PC-3 (cell line): ENCODE measurements at regions of chr4 and their contacts with region 1.

Region 1: GRCh38 chr4:26269038-26269437 is 51.8 kb upstream of the RBPJ start:
- DNase-seq: no peak
- ATAC-seq: no peak
- H3K4me3 ChIP-seq: no peak overlapping the region
- H3K27ac ChIP-seq: no peak overlapping the region
- H3K4me1 ChIP-seq: no peaks in the 10 kb centered on the region
- H3K27me3 ChIP-seq: no peaks in the 10 kb centered on the region
- CTCF ChIP-seq: no peak

Region 2: DNA sequence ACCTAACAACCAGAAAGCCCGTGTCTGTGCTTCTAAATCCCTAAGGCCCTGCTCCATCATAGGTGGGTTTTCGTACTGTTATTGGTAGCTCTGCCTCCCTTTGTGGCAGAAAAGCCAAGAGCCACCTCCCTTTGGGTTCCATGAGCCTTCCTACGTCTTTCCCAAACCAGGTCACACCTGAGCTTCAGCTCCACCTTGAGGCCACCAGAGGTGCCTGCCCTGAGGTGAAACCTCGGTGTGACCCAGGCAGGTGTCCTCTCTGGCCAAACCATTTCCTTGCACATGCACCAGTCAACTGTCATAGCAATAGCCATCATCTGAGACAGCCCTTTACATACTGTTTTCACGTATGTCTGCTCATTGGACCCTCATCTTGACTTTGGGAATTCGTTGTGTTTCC is 136.2 kb before region 1 on chr4:
- CTCF ChIA-PET with region 1: interaction called, 17 read pairs
- POLR2A ChIA-PET with region 1: no interaction called
- intact Hi-C with region 1: no loop called
- DNase-seq: no peak
- ATAC-seq: no peak
- H3K4me3 ChIP-seq: no peak overlapping the region
- H3K27ac ChIP-seq: no peak overlapping the region
- H3K4me1 ChIP-seq: peaks cover 8% of the 10 kb centered on the region
- H3K27me3 ChIP-seq: no peaks in the 10 kb centered on the region
- CTCF ChIP-seq: peak; percentile 38; the same call in 1 of the 2 replicates

Region 3: GRCh38 chr4:26299254-26299882 is 30.3 kb after region 1 on chr4:
- CTCF ChIA-PET with region 1: no interaction called
- POLR2A ChIA-PET with region 1: no interaction called
- intact Hi-C with region 1: no loop called
- DNase-seq: no peak
- ATAC-seq: no peak
- H3K4me3 ChIP-seq: no peak overlapping the region
- H3K27ac ChIP-seq: no peak overlapping the region
- H3K4me1 ChIP-seq: peaks cover 21% of the 10 kb centered on the region
- H3K27me3 ChIP-seq: no peaks in the 10 kb centered on the region
- CTCF ChIP-seq: no peak